ENCODE measurements at regions of chr19 and their contacts with region 1.

Region 1: GRCh38 chr19:15222738-15223648 is 9.3 kb downstream of the EPHX3 start:
- DNase-seq: peak; percentile 90 to 92
- H3K4me3 ChIP-seq: peak overlapping the region; percentile 62 to 74 (median 62)
- H3K27ac ChIP-seq: peak overlapping the region; percentile 60
- H3K4me1 ChIP-seq: peaks cover 0 to 3% (median 1%) of the 10 kb centered on the region in 4 experiments; a peak in 4 of 7 replicates
- H3K27me3 ChIP-seq: no peaks in the 10 kb centered on the region
- CTCF ChIP-seq: peak in 1 of 3 experiments; percentile 7; a peak in 1 of 4 replicates
- EP300 ChIP-seq: no peak
- POLR2A ChIP-seq: no peak; a peak in 2 of 3 replicates
- RAD21 ChIP-seq: peak in 1 of 2 experiments; percentile 24; a peak in 3 of 4 replicates

Region 2: GRCh38 chr19:15195371-15196334 is 27.3 kb before region 1 on chr19:
- CTCF ChIA-PET with region 1: interaction called, 4 read pairs
- POLR2A ChIA-PET with region 1: interaction called, 36 read pairs
- DNase-seq: peak in 1 of 2 experiments; percentile 98
- H3K4me3 ChIP-seq: peak overlapping the region; percentile 49 to 80 (median 56)
- H3K27ac ChIP-seq: peak overlapping the region; percentile 73
- H3K4me1 ChIP-seq: peaks cover 4 to 15% (median 9%) of the 10 kb centered on the region in 4 experiments
- H3K27me3 ChIP-seq: no peaks in the 10 kb centered on the region; a peak in 1 of 7 replicates
- CTCF ChIP-seq: peak; percentile 33 to 45 (median 35)
- EP300 ChIP-seq: peak in 1 of 2 experiments; percentile 60; a peak in 1 of 3 replicates
- POLR2A ChIP-seq: no peak
- RAD21 ChIP-seq: peak in 1 of 2 experiments; percentile 35; a peak in 2 of 4 replicates

Region 3: GRCh38 chr19:15280915-15281683 is 58.1 kb after region 1 on chr19:
- CTCF ChIA-PET with region 1: no interaction called
- POLR2A ChIA-PET with region 1: no interaction called
- DNase-seq: no peak
- H3K4me3 ChIP-seq: no peak overlapping the region
- H3K27ac ChIP-seq: no peak overlapping the region
- H3K4me1 ChIP-seq: peaks cover 4 to 13% (median 12%) of the 10 kb centered on the region in 4 experiments
- H3K27me3 ChIP-seq: no peaks in the 10 kb centered on the region
- CTCF ChIP-seq: no peak
- EP300 ChIP-seq: no peak
- POLR2A ChIP-seq: no peak
- RAD21 ChIP-seq: no peak